ENCODE measurements at regions of chr10 and their contacts with region 1.

Region 1: GRCh38 chr10:4849555-4850242 is 23.7 kb downstream of the AKR1E2 start:
- DNase-seq: peak; percentile 88
- ATAC-seq: peak; percentile 73
- H3K4me3 ChIP-seq: no peak overlapping the region
- H3K27ac ChIP-seq: no peak overlapping the region
- H3K4me1 ChIP-seq: peaks cover 11% of the 10 kb centered on the region; the same call in 1 of the 2 replicates
- H3K27me3 ChIP-seq: no peaks in the 10 kb centered on the region
- CTCF ChIP-seq: peak; percentile 97

Region 2: GRCh38 chr10:4953405-4953804 is 103.7 kb after region 1 on chr10:
- CTCF ChIA-PET with region 1: no interaction called
- POLR2A ChIA-PET with region 1: no interaction called
- intact Hi-C with region 1: loop called (anchors 10 kb)
- DNase-seq: no peak
- ATAC-seq: no peak
- H3K4me3 ChIP-seq: no peak overlapping the region
- H3K27ac ChIP-seq: no peak overlapping the region
- H3K4me1 ChIP-seq: peaks cover 1% of the 10 kb centered on the region; the same call in 1 of the 2 replicates
- H3K27me3 ChIP-seq: no peaks in the 10 kb centered on the region
- CTCF ChIP-seq: no peak

Region 3: DNA sequence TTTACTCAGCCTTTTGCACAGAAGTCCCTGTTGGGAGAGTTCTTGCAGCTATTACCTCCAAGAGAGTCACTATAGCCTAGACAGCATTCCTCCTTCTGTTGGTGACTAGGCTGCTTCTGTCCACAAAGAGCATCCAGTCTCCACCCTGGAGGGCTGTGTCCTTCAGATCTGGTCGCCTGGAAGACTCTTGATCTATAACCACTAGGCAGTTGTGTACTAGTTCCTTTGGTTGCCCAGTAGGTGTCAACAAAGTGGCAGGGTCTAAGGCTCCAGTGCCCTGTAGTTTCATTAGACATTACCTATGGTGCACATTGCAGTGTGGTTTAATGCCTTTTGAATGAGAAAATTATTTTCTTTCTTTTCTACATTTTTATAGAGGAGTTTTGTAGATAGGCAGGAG is 165.2 kb after region 1 on chr10:
- CTCF ChIA-PET with region 1: no interaction called
- POLR2A ChIA-PET with region 1: no interaction called
- intact Hi-C with region 1: loop called (anchors 1 kb)
- DNase-seq: peak; percentile 11
- ATAC-seq: peak; percentile 21
- H3K4me3 ChIP-seq: no peak overlapping the region
- H3K27ac ChIP-seq: no peak overlapping the region
- H3K4me1 ChIP-seq: peaks cover 21% of the 10 kb centered on the region
- H3K27me3 ChIP-seq: no peaks in the 10 kb centered on the region
- CTCF ChIP-seq: peak; percentile 33; the same call in 1 of the 2 replicates

Region 4: DNA sequence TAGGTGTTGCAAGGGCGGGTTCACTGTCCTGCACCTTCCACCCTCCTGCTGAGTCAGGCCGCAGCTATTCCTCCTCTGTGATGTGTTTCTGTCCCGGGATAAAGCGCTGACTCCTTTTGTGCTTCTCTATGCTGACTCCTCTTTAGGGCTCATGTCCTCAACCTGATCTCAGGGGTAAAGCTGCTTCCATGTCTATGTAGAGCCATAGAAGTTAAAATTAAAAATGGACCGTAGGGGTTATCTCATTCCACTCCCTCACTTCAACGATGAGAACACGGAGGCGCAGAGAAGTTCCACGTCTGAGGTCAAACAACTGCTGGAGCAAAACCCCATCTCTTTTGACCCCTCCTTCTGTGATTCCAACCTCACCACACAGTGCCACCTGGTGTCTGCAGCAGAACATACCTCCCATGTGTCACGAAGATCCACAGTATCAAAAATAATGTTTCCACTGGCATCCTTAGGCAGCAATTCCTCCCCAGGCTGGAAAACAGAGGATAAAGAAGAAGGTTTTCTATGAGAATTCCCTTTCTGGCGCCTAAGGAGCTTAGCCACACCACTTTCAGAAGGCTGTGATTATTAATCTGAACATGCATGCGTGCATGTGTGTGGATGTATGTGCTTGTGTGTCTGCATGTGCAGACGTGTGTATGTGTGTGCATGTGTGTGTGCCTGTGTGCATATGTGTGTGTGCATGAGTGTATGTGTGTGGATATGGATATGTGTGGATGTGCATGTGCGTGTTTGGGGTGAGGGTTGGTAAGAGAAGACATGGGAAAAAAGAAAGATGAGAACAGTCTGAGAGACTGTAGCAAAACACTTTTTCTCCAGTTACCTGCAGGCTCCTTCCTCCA is 433.8 kb after region 1 on chr10:
- CTCF ChIA-PET with region 1: no interaction called
- POLR2A ChIA-PET with region 1: no interaction called
- intact Hi-C with region 1: loop called (anchors 1 kb)
- DNase-seq: peak; percentile 53
- ATAC-seq: peak; percentile 83
- H3K4me3 ChIP-seq: peak overlapping the region; percentile 26; the same call in 1 of the 2 replicates
- H3K27ac ChIP-seq: no peak overlapping the region
- H3K4me1 ChIP-seq: no peaks in the 10 kb centered on the region
- H3K27me3 ChIP-seq: no peaks in the 10 kb centered on the region
- CTCF ChIP-seq: peak; percentile 69

Region 5: GRCh38 chr10:5434017-5434753 is 584.5 kb after region 1 on chr10:
- CTCF ChIA-PET with region 1: no interaction called
- POLR2A ChIA-PET with region 1: no interaction called
- intact Hi-C with region 1: loop called (anchors 2 kb)
- DNase-seq: peak; percentile 43
- ATAC-seq: peak; percentile 62
- H3K4me3 ChIP-seq: no peak overlapping the region
- H3K27ac ChIP-seq: no peak overlapping the region
- H3K4me1 ChIP-seq: no peaks in the 10 kb centered on the region
- H3K27me3 ChIP-seq: no peaks in the 10 kb centered on the region
- CTCF ChIP-seq: peak; percentile 66